IMR-90 (cell line): ENCODE measurements at regions of chr13 and their contacts with region 1.

Region 1: DNA sequence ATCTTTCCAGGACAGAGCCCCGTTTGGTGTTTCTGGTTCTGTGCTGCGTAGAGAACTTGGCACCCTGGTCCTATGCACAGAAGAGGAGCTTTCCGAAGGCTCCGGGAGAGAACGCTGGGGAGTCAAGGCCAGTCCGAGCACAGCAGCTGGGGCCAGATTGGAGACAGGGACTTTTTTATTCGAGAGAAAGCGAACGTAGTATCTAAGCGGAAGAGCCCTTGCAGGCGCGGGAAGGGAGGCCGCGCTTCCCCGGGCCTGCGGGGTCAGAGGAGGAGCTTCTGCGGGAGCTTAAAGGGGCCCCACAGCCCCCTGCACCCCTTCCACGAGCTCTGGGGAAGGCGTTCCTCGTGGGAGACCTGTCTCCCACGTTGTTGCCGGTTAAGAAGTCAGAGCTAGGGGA is 48.6 kb upstream of the ARHGEF7 start:
- DNase-seq: no peak
- ATAC-seq: no peak
- H3K4me3 ChIP-seq: no peak overlapping the region
- H3K27ac ChIP-seq: no peak overlapping the region
- H3K4me1 ChIP-seq: no peaks in the 10 kb centered on the region
- H3K27me3 ChIP-seq: peaks cover 26% of the 10 kb centered on the region
- CTCF ChIP-seq: no peak
- POLR2A ChIP-seq: no peak
- RAD21 ChIP-seq: no peak

Region 2: GRCh38 chr13:111219280-111219679 is 152.7 kb after region 1 on chr13:
- CTCF ChIA-PET with region 1: interaction called, 3 read pairs
- POLR2A ChIA-PET with region 1: no interaction called
- dilution Hi-C with region 1: no loop called
- in situ Hi-C with region 1: no loop called
- intact Hi-C with region 1: loop called (anchors 2 kb)
- DNase-seq: peak; percentile 88
- ATAC-seq: peak; percentile 75
- H3K4me3 ChIP-seq: no peak overlapping the region
- H3K27ac ChIP-seq: peak overlapping the region; percentile 49; the same call in 1 of the 2 replicates
- H3K4me1 ChIP-seq: peaks cover 10% of the 10 kb centered on the region
- H3K27me3 ChIP-seq: no peaks in the 10 kb centered on the region
- CTCF ChIP-seq: no peak
- POLR2A ChIP-seq: no peak
- RAD21 ChIP-seq: no peak

Region 3: DNA sequence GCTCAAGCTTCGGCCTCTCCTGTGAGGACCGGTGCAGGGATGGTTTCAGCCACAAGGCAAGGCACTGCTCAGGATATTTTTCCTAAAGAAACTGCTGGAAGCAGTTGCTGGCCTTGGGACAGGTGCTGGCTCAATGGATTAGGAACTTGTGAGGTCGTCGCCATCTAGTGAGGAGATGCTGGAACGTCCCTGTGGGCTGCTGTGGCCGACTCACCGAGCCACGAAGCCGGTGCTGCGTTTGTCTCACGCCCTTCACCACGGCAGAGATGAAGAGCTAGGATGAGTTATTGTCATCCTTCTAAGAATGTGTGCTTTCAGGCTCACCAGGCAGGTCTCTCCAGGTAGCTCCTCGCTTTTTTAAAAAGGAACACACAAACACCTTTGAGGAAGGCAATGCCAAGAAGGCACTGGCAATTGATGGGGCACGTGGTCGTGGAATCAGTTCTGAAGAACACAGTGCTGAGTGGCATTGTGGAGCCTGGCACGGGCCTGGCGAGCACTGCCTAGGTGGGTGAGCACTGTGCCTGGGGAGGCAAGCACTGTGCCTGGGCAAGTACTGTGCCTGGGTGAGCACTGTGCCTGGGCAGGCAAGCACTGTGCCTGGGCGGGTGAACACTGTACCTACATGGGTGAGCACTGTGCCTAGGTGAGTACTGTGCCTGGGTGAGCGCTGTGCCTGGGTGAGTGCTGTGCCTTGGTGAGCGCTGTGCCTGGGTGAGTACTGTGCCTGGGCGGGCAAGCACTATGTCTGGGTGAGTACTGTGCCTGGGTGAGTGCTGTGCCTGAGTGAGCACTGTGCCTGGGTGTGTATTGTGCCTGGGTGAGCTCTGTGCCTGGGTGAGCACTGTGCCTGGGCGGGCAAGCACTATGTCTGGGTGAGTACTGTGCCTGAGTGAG is 394.3 kb after region 1 on chr13:
- CTCF ChIA-PET with region 1: interaction called, 3 read pairs
- POLR2A ChIA-PET with region 1: no interaction called
- dilution Hi-C with region 1: no loop called
- in situ Hi-C with region 1: no loop called
- intact Hi-C with region 1: loop called (anchors 1 kb)
- DNase-seq: peak; percentile 47
- ATAC-seq: peak; percentile 89
- H3K4me3 ChIP-seq: no peak overlapping the region
- H3K27ac ChIP-seq: no peak overlapping the region
- H3K4me1 ChIP-seq: no peaks in the 10 kb centered on the region
- H3K27me3 ChIP-seq: peaks cover 2% of the 10 kb centered on the region; the same call in 1 of the 2 replicates
- CTCF ChIP-seq: peak; percentile 45
- POLR2A ChIP-seq: no peak
- RAD21 ChIP-seq: peak; percentile 51

Region 4: GRCh38 chr13:112443995-112444860 is 1377.7 kb after region 1 on chr13:
- CTCF ChIA-PET with region 1: no interaction called
- POLR2A ChIA-PET with region 1: no interaction called
- dilution Hi-C with region 1: no loop called
- in situ Hi-C with region 1: no loop called
- intact Hi-C with region 1: loop called (anchors 10 kb)
- DNase-seq: peak; percentile 42
- ATAC-seq: peak; percentile 95
- H3K4me3 ChIP-seq: no peak overlapping the region
- H3K27ac ChIP-seq: no peak overlapping the region
- H3K4me1 ChIP-seq: no peaks in the 10 kb centered on the region
- H3K27me3 ChIP-seq: peaks cover 9% of the 10 kb centered on the region
- CTCF ChIP-seq: peak; percentile 81
- POLR2A ChIP-seq: no peak
- RAD21 ChIP-seq: peak; percentile 87